Heart left ventricle (tissue), 16 donors: ENCODE measurements at regions of chr6 and their contacts with region 1.

Region 1: GRCh38 chr6:6749702-6750491 is 161.4 kb downstream of the LY86 start:
- DNase-seq: peak in 4 of 5 donors; percentile 66 to 72 (median 69)
- ATAC-seq: peak; percentile 16 to 56 (median 51)
- H3K4me3 ChIP-seq: peak overlapping the region in 1 of 12 donors; percentile 31
- H3K27ac ChIP-seq: peak overlapping the region; percentile 33 to 95 (median 88)
- H3K4me1 ChIP-seq: peaks cover 0 to 62% (median 47%) of the 10 kb centered on the region in 12 donors
- H3K27me3 ChIP-seq: no peaks in the 10 kb centered on the region
- CTCF ChIP-seq: peak in 1 of 12 donors; percentile 5
- POLR2A ChIP-seq: no peak

Region 2: DNA sequence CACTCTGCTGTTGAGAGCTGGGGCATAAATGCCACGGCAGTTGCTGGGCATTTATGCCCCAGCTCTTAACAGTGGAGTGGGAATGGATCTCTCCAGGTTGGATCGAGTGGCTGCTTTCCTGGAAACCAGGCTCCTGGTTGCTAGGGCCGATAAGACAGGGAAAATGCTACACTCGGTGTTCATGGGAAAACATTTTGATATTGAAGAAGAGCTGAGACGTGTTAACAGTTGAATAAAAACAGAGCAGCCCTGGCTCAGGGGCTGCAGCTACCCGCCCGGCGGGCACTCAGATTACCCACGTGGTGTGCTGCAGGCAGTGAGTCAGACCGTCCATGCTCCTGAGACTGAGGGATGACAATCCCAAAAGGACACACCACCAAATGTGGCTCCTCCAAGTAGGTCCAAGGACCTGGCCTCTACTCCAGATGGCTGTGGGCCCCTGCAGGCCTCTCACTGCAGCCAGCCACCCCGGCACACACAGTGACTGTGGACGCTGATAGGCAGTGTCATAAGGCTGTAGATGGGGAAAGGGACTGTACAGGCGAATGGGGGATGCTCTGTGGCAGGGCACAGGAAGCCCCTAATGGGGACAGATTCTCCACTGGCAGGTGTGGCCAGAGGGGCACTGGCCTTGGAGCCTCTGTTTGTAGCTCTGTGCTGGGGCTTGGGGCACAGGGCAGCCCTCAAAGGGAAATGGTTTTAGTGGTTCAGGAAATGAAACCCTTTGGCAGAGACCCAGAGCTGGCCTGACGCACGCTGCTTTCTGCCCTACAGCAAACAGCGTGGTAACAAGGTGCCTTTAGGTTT is 76.4 kb after region 1 on chr6:
- intact Hi-C with region 1: loop called in 2 of 10 experiments (anchors 5 to 10 kb)
- DNase-seq: peak; percentile 58 to 78 (median 63)
- ATAC-seq: peak; percentile 79 to 91 (median 87)
- H3K4me3 ChIP-seq: no peak overlapping the region
- H3K27ac ChIP-seq: peak overlapping the region; percentile 57 to 92 (median 75)
- H3K4me1 ChIP-seq: peaks cover 0 to 55% (median 13%) of the 10 kb centered on the region in 12 donors
- H3K27me3 ChIP-seq: no peaks in the 10 kb centered on the region
- CTCF ChIP-seq: no peak
- POLR2A ChIP-seq: no peak

Region 3: DNA sequence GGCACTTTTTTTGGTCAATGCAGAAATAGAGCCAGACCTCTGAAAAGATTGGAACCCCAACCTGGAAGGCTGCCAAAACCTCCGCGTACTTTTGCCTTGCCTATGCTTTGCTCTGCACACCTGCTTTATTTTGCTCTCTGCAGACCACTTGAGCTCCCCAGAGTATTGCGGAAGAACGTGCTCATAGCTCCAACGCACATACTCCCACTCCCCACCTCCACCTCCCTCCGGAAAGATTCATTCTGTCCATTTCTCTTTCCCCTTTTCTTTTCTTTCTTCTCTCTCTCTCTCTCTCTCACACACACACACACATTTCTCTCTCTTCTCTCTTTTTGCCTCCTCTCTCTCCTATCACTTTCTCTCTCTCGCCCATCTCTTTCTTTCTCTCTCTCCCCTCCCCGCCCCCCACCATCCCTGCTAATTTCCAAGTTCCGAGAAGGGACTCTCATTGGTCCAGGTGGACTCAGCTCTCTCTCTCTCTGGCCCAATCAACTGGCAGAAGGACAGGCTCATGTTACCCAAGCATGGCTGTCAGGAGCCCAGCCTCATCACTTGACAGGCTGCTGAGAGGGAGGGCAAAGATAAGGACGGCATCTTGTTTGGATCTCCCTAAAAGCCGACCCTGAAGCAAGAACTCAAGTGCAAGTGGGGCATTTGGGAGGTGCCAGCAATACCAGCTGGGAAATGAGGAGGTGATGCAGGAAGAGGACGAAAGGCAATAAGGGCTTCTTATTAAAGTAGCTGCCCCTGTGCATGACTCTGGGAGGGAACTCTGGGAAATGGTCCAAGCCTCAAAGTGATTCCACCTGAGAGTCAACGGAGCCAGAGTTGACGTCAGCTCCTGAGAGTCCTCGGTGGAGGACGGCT is 84.7 kb after region 1 on chr6:
- intact Hi-C with region 1: loop called in 2 of 10 experiments (anchors 5 to 10 kb)
- DNase-seq: peak in 2 of 5 donors; percentile 45 to 48
- ATAC-seq: peak; percentile 35 to 82 (median 76)
- H3K4me3 ChIP-seq: no peak overlapping the region
- H3K27ac ChIP-seq: peak overlapping the region in 1 of 12 donors; percentile 41
- H3K4me1 ChIP-seq: peaks cover 0 to 6% (median 0%) of the 10 kb centered on the region in 12 donors
- H3K27me3 ChIP-seq: no peaks in the 10 kb centered on the region
- CTCF ChIP-seq: no peak
- POLR2A ChIP-seq: no peak

Region 4: DNA sequence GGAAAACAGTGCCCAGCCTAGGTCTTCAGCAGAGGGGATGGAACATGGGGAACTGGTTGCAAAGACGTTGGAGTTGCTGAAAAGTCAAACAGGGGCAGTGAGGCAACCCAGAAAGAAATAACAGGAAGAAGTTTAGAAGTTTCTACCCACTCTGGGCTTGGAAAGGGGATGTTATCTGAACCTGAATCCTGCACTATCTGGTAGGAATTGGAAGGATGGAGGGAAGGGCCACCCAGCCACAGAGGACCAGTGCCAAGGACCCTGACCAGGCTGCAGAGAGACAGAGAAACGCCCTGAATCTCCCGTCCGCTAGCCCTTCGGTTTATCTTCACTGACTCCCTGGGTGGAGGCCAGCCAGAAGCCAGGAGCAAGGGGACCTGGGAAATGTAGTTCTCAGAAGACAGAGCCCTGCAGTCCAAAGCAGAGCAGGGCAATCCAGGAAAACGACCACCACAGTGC is 140.5 kb after region 1 on chr6:
- intact Hi-C with region 1: loop called in 3 of 10 experiments (anchors 5 kb)
- DNase-seq: peak; percentile 38 to 76 (median 63)
- ATAC-seq: peak in 3 of 4 donors; percentile 46 to 56 (median 55)
- H3K4me3 ChIP-seq: peak overlapping the region in 1 of 12 donors; percentile 23
- H3K27ac ChIP-seq: peak overlapping the region in 9 of 12 donors; percentile 34 to 87 (median 74)
- H3K4me1 ChIP-seq: peaks cover 0 to 43% (median 19%) of the 10 kb centered on the region in 12 donors
- H3K27me3 ChIP-seq: no peaks in the 10 kb centered on the region
- CTCF ChIP-seq: no peak
- POLR2A ChIP-seq: no peak

Region 5: GRCh38 chr6:6998194-6998569 is 248.3 kb after region 1 on chr6:
- intact Hi-C with region 1: loop called in 1 of 10 experiments (anchors 10 kb)
- DNase-seq: no peak
- ATAC-seq: no peak
- H3K4me3 ChIP-seq: no peak overlapping the region
- H3K27ac ChIP-seq: no peak overlapping the region
- H3K4me1 ChIP-seq: peaks cover 0 to 28% (median 6%) of the 10 kb centered on the region in 12 donors
- H3K27me3 ChIP-seq: no peaks in the 10 kb centered on the region
- CTCF ChIP-seq: no peak
- POLR2A ChIP-seq: no peak